Activated B cell treated with CpG ODN at 0.5 μM for 24 hours (primary cell): ENCODE measurements at regions of chr1 and their contacts with region 1.

Region 1: GRCh38 chr1:45430490-45430889 is 60.5 kb downstream of the TESK2 start:
- DNase-seq: no peak
- ATAC-seq: no peak
- H3K4me3 Mint-ChIP-seq: no peak overlapping the region
- H3K27ac Mint-ChIP-seq: peak overlapping the region; percentile 47
- H3K4me1 Mint-ChIP-seq: peaks cover 23% of the 10 kb centered on the region
- H3K27me3 Mint-ChIP-seq: no peaks in the 10 kb centered on the region
- CTCF ChIP-seq: no peak

Region 2: GRCh38 chr1:45033356-45033755 is 397.1 kb before region 1 on chr1:
- CTCF ChIA-PET with region 1: no interaction called
- POLR2A ChIA-PET with region 1: interaction called, 11 read pairs
- intact Hi-C with region 1: no loop called
- DNase-seq: no peak
- ATAC-seq: peak; percentile 45
- H3K4me3 Mint-ChIP-seq: no peak overlapping the region
- H3K27ac Mint-ChIP-seq: peak overlapping the region; percentile 6
- H3K4me1 Mint-ChIP-seq: peaks cover 7% of the 10 kb centered on the region
- H3K27me3 Mint-ChIP-seq: no peaks in the 10 kb centered on the region
- CTCF ChIP-seq: no peak

Region 3: GRCh38 chr1:45299981-45300668 is 130.4 kb before region 1 on chr1:
- CTCF ChIA-PET with region 1: no interaction called
- POLR2A ChIA-PET with region 1: no interaction called
- intact Hi-C with region 1: no loop called
- DNase-seq: no peak
- ATAC-seq: no peak
- H3K4me3 Mint-ChIP-seq: no peak overlapping the region
- H3K27ac Mint-ChIP-seq: peak overlapping the region; percentile 44
- H3K4me1 Mint-ChIP-seq: peaks cover 21% of the 10 kb centered on the region
- H3K27me3 Mint-ChIP-seq: no peaks in the 10 kb centered on the region
- CTCF ChIP-seq: peak; percentile 70

Region 4: DNA sequence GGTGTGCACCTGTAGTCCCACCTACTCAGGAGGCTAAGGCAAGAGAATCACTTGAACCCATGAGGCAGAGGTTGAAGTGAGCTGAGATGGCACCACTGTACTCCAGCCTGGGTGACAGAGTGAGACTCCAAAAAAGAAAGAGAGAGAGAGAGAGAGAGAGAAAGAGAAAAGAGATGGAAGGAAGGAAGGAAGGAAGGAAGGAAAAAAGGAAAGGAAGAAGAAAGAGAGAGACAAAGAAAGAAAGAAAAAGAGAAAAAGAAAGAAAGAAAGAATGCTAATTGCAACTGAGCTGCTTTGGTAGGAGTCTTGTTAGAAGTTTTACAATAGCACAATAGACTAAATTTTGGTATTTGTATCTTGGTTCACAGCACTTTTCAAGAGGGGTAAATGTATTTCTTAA is 34.8 kb after region 1 on chr1:
- CTCF ChIA-PET with region 1: no interaction called
- POLR2A ChIA-PET with region 1: no interaction called
- intact Hi-C with region 1: loop called (anchors 5 kb)
- DNase-seq: no peak
- ATAC-seq: no peak
- H3K4me3 Mint-ChIP-seq: no peak overlapping the region
- H3K27ac Mint-ChIP-seq: no peak overlapping the region
- H3K4me1 Mint-ChIP-seq: peaks cover 28% of the 10 kb centered on the region
- H3K27me3 Mint-ChIP-seq: no peaks in the 10 kb centered on the region
- CTCF ChIP-seq: no peak